ENCODE measurements at regions of chr11 and their contacts with region 1.

Region 1: DNA sequence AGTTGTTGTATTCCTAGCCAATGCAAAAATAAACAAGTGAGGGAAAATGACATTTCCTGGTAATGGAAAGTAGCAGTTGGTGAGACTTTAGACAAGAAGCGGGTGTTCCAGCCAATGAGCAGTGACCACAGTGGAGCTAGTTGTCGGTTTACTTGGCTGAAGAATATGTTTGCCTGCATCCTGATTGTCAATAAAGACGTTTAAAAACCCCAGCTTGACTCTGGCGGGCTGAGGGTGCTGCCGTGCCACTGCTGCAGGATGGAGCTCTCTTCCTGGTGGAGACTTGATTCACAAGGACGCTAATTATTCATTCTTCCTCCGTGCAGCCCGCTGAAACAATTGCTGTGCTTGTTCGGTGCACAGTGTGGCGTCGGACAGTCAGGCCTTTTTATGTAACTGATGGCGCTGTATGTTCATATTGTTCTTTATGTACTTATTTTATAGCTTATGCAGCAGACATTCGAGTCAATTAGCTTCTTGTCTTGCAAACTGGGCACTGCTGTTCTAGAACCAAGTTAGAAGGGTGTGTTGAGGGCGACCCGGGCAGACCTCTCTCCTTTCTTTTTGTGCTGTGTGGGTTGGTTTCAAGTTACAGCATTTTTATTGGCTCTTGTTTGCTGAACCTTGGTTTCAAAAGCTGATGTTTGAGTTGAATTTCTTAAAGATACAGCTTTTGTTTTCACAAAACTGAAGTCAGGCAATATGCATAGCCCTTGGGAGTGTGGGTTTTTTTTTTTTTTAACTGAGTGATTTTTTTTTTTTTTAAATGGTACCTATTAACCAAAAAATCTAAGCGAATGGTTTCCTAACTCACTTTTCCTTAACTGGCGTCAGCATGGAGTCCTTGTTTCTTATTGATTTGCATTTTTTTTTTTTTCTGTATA is 153.9 kb downstream of the TEAD1 start:
- DNase-seq: peak; percentile 69
- ATAC-seq: peak; percentile 77
- H3K4me3 ChIP-seq: peak overlapping the region; percentile 74
- H3K27ac ChIP-seq: peak overlapping the region; percentile 68
- H3K4me1 ChIP-seq: peaks cover 37% of the 10 kb centered on the region
- H3K27me3 ChIP-seq: no peaks in the 10 kb centered on the region
- CTCF ChIP-seq: no peak

Region 2: DNA sequence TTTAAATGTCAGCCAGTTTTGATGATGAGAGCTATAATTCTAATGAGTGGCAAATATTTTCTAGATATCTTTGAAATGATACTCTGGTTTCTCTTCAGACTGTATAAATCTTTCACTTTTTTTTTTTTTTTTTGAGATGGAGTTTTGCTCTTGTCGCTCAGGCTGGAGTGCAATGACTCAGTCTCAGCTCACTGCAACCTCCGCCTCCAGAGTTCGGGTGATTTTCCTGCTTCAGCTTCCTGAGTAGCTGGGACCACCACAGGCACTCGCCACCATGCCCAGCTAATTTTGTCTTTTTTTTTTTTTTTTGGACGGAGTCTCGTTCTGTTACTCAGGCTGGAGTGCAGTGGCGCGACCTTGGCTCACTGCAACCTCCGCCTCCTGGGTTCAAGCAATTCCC is 40.3 kb before region 1 on chr11:
- CTCF ChIA-PET with region 1: no interaction called
- POLR2A ChIA-PET with region 1: interaction called, 11 read pairs
- intact Hi-C with region 1: no loop called
- DNase-seq: peak; percentile 62
- ATAC-seq: peak; percentile 47
- H3K4me3 ChIP-seq: no peak overlapping the region
- H3K27ac ChIP-seq: no peak overlapping the region
- H3K4me1 ChIP-seq: peaks cover 29% of the 10 kb centered on the region
- H3K27me3 ChIP-seq: no peaks in the 10 kb centered on the region
- CTCF ChIP-seq: no peak

Measured in PC-3 (cell line).